Esophagus squamous epithelium (tissue), 5 donors: ENCODE measurements at regions of chrX and their contacts with region 1.

Region 1: GRCh38 chrX:19887911-19888879 is 795 bp upstream of the SH3KBP1 start:
- DNase-seq: no peak
- H3K4me3 ChIP-seq: peak overlapping the region; percentile 51 to 80 (median 62)
- H3K27ac ChIP-seq: peak overlapping the region; percentile 24 to 78 (median 64)
- H3K4me1 ChIP-seq: peaks cover 0 to 15% (median 0%) of the 10 kb centered on the region in 3 donors
- H3K27me3 ChIP-seq: peaks cover 0 to 4% (median 0%) of the 10 kb centered on the region in 4 donors
- CTCF ChIP-seq: peak; percentile 10 to 58 (median 43)
- POLR2A ChIP-seq: no peak

Region 2: DNA sequence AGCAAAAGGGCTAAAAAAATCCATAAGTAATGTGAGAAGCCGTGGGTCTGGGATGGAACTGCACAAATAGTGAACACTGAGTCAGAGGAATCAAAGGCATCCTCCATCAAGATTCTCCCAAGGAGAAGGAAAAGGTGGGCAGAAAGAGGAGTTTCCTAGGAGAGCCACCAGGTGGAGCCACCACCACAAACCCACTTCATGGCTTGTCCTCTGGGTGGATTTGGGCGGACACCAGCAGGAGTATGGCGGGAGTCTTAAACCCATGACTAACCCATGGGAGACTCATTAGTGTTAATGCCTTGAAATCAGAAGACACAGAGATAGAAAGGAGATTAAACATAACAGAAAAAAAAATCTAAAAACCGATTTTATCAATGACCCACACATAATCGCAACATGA is 148.5 kb before region 1 on chrX:
- intact Hi-C with region 1: loop called (anchors 10 kb)
- DNase-seq: no peak
- H3K4me3 ChIP-seq: no peak overlapping the region
- H3K27ac ChIP-seq: no peak overlapping the region
- H3K4me1 ChIP-seq: peaks cover 0 to 2% (median 0%) of the 10 kb centered on the region in 3 donors
- H3K27me3 ChIP-seq: no peaks in the 10 kb centered on the region
- CTCF ChIP-seq: peak; percentile 40 to 68 (median 60)
- POLR2A ChIP-seq: no peak

Region 3: GRCh38 chrX:20056704-20057103 is 168.5 kb after region 1 on chrX:
- intact Hi-C with region 1: no loop called
- DNase-seq: no peak
- H3K4me3 ChIP-seq: no peak overlapping the region
- H3K27ac ChIP-seq: no peak overlapping the region
- H3K4me1 ChIP-seq: peaks cover 0 to 6% (median 0%) of the 10 kb centered on the region in 3 donors
- H3K27me3 ChIP-seq: no peaks in the 10 kb centered on the region
- CTCF ChIP-seq: no peak
- POLR2A ChIP-seq: no peak